ENCODE measurements at regions of chr1 and their contacts with region 1.

Region 1: DNA sequence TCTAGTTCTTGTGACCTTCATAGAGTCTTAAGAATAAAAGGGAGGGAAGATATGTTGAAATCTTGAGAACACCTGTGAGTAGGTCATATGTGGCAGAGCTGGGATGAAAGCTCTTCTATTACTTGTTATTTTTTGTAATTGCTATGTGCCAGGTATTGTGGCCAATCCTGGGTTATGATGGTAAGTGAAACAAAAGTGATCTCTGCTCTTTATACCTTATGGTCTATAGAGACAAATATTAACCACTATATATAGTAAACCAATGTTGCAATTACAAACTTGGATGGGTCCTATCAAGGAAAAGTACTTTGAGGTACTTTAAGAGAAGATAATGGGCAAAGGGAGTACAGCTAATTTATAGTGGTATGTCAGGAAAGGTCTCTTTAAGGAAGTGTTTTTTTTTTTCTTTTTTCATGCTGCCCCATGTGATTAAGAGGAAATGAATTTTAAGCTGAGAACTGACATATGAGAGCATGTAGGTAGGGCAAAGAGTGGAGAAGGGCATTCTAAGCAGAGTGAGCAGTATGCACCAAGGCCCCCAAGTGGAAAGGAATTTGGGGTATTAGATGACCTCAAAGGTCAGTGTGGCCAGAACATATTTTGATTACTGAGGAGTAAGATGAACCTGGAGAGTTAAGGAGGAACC is 43.3 kb downstream of the POU2F1 start:
- DNase-seq: no peak
- ATAC-seq: peak; percentile 43
- H3K4me3 Mint-ChIP-seq: no peak overlapping the region
- H3K27ac Mint-ChIP-seq: no peak overlapping the region
- H3K4me1 Mint-ChIP-seq: peaks cover 12% of the 10 kb centered on the region
- H3K27me3 Mint-ChIP-seq: no peaks in the 10 kb centered on the region
- CTCF ChIP-seq: no peak

Region 2: GRCh38 chr1:167249702-167250101 is 14.2 kb before region 1 on chr1:
- CTCF ChIA-PET with region 1: interaction called, 6 read pairs
- POLR2A ChIA-PET with region 1: no interaction called
- intact Hi-C with region 1: loop called (anchors 2 kb)
- DNase-seq: no peak
- ATAC-seq: peak; percentile 61
- H3K4me3 Mint-ChIP-seq: no peak overlapping the region
- H3K27ac Mint-ChIP-seq: no peak overlapping the region
- H3K4me1 Mint-ChIP-seq: peaks cover 46% of the 10 kb centered on the region
- H3K27me3 Mint-ChIP-seq: no peaks in the 10 kb centered on the region
- CTCF ChIP-seq: no peak

Region 3: DNA sequence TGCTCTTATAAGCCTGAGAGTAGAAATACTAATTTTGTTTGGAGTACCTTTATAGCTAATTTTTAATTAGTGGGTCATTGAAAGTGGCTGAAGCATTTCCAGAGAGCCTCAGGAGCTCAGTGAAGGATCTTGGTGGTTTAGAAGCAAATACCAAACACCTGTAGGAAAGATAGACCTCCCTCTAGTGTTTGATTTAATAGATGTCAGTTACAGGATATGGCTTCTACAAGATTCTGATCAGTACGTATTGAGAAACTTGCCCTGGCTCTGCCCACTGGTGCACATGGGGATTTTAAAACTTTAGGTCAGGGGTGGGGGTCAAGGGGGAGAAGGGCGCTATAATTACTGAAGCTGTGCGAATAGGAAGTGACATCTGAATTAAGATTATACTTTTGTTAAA is 78.9 kb after region 1 on chr1:
- CTCF ChIA-PET with region 1: interaction called, 86 read pairs
- POLR2A ChIA-PET with region 1: interaction called, 4 read pairs
- intact Hi-C with region 1: loop called (anchors 1 kb)
- DNase-seq: no peak
- ATAC-seq: peak; percentile 70
- H3K4me3 Mint-ChIP-seq: no peak overlapping the region
- H3K27ac Mint-ChIP-seq: no peak overlapping the region
- H3K4me1 Mint-ChIP-seq: peaks cover 17% of the 10 kb centered on the region
- H3K27me3 Mint-ChIP-seq: no peaks in the 10 kb centered on the region
- CTCF ChIP-seq: no peak

Region 4: DNA sequence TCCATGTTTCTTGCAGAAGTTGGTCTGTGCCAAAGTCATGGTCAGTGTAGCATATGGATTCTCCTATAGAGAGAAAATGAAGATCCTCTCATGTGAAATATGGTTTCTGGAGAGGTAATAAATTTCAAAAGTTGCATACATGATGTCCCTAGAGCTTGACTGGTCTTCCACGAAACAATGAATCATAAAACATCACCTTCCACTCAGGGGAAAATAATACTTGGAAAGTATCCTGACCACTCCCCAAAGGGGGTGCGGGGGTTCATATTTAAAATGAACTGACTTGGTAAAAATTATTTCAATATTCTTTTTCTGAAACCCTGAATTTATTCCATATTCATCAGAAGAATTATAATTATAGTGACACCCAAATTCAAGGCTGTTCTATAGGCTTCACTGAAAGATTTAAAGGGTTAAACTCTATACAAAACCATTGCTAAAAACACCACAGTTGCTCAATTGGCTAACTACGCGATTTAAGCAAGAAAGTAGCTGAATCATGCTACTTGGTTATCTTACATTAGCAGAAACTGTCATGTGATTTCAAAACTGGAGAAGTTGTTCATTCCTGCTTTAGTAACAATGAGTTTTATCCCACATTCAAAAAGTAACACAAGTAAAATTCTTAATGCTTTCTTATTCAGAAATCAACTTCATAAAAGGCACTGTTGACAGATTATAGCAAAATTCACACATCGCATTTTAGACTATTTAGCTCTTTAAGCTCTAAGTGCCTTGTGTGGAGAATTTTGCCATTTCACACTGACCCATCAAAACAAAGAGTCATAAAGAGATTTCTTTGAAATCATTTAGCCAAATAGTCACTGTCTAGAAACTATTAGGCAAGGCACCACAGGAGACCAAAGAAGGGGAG is 284.4 kb after region 1 on chr1:
- CTCF ChIA-PET with region 1: interaction called, 4 read pairs
- POLR2A ChIA-PET with region 1: interaction called, 17 read pairs
- intact Hi-C with region 1: loop called (anchors 5 kb)
- DNase-seq: no peak
- ATAC-seq: no peak
- H3K4me3 Mint-ChIP-seq: no peak overlapping the region
- H3K27ac Mint-ChIP-seq: no peak overlapping the region
- H3K4me1 Mint-ChIP-seq: peaks cover 5% of the 10 kb centered on the region
- H3K27me3 Mint-ChIP-seq: no peaks in the 10 kb centered on the region
- CTCF ChIP-seq: no peak

Measured in activated B cell treated with CpG ODN at 0.5 μM for 24 hours (primary cell).